MCF 10A (cell line): ENCODE measurements at regions of chr20 and their contacts with region 1.

Region 1: GRCh38 chr20:1776681-1777475 is 118.3 kb upstream of the SIRPA start:
- DNase-seq: peak; percentile 87
- H3K4me3 Mint-ChIP-seq: peak overlapping the region; percentile 84
- H3K27ac Mint-ChIP-seq: peak overlapping the region; percentile 89
- H3K4me1 Mint-ChIP-seq: peaks cover 18% of the 10 kb centered on the region
- H3K27me3 Mint-ChIP-seq: peaks cover 14% of the 10 kb centered on the region
- CTCF ChIP-seq: peak; percentile 75

Region 2: DNA sequence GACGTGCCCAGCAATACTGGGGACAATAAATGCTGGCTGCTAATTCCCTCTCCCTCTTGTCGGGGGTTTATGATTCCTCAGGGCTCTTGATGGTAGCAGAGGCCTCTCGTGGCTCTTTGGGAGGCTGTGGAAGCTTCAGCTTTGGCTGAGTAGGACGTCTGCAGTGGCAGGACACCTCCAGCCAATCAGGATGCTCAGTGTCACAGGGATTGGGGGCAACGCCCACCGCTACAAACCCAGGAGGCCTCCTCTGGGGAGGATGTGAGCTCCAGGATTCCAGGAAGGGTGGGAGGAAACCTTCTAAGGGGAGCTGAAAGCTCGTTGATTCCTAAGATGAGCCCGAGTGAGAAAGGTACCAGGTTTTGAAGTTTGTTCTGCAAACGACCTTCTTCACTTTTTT is 794.1 kb before region 1 on chr20:
- CTCF ChIA-PET with region 1: no interaction called
- POLR2A ChIA-PET with region 1: no interaction called
- intact Hi-C with region 1: no loop called
- DNase-seq: no peak
- H3K4me3 Mint-ChIP-seq: no peak overlapping the region
- H3K27ac Mint-ChIP-seq: no peak overlapping the region
- H3K4me1 Mint-ChIP-seq: peaks cover 7% of the 10 kb centered on the region
- H3K27me3 Mint-ChIP-seq: peaks cover 62% of the 10 kb centered on the region
- CTCF ChIP-seq: no peak

Region 3: DNA sequence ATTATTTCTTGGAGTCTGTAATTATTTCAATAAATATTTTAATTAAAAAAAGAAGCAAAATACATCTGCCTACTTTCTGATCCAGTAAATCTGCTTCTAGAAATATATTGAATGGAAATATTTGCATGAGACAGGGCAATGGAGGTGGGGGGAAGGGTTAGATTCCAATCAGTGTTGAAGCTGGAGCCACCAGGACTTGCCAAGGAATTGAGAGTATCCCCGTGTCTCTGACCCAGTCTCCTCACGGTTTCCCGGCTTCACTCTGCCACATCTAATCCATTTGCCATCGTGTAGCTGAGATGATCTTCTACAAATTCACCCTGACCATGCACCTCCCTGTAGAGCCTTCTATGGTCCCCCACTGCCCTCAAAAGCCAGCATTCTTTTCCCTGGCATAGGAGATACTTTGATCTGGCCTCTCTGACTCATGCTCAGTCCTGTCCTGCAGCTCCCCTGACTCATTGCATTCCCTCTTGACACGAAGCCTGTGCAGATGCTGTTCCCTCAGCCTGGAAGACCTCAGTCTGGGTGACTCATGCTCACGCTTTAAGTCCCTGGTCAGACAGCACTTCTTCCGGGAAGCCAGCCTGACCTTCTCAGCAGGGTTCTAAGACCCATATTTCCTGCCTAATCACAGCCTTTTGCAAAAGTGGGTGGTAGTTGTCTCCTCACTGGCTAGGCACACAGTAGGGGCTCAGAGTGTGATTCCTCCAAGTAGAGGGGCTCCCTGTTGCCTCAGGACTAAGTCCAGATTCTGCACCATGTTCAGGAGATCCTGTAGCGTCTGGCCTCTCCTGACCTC is 361.0 kb before region 1 on chr20:
- CTCF ChIA-PET with region 1: no interaction called
- POLR2A ChIA-PET with region 1: no interaction called
- intact Hi-C with region 1: no loop called
- DNase-seq: peak; percentile 97
- H3K4me3 Mint-ChIP-seq: no peak overlapping the region
- H3K27ac Mint-ChIP-seq: peak overlapping the region; percentile 32
- H3K4me1 Mint-ChIP-seq: peaks cover 17% of the 10 kb centered on the region
- H3K27me3 Mint-ChIP-seq: no peaks in the 10 kb centered on the region
- CTCF ChIP-seq: no peak

Region 4: DNA sequence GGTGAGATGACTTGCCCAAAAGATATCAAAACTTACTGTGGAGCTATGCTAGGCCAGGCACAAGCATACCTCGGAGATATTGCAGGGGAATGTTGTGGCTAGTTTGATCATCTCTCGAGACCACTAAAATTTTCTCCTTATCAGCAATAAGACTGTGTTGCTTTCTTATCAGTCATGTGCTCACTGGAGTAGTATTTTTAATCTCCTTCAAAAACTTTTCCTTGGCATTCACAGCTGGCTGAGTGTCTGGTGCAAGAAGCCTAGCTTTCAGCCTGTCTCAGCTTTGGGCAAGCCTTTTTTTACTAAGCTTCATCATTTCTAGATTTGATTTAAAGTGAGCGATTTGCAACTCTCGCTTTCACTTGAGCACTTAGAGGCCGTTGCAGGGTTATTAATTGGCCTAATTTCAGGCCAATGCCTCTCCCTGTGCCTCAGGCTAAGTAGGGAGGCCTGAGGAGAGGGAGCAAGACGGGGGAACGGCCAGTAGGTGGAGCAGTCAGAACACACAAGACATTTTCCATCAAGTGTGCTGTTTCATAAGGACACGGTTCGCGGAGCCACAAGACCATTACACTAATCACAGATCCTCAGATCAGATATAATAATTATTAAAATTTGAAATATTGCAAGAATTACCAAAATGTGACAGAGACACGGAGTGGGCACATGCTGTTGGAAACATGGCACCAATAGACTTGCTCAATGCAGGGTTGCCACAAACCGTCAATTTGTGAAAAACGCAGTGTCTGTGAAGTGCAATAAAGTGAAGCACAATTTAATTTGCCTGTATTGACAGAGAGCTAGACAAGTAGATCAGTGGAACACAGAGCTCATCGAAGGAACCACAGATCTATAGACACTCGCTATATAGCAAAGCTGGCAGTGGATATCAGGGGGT is 12.5 kb before region 1 on chr20:
- CTCF ChIA-PET with region 1: interaction called, 64 read pairs
- POLR2A ChIA-PET with region 1: interaction called, 29 read pairs
- intact Hi-C with region 1: no loop called
- DNase-seq: peak; percentile 84
- H3K4me3 Mint-ChIP-seq: no peak overlapping the region
- H3K27ac Mint-ChIP-seq: no peak overlapping the region
- H3K4me1 Mint-ChIP-seq: peaks cover 10% of the 10 kb centered on the region
- H3K27me3 Mint-ChIP-seq: no peaks in the 10 kb centered on the region
- CTCF ChIP-seq: peak; percentile 54

Region 5: DNA sequence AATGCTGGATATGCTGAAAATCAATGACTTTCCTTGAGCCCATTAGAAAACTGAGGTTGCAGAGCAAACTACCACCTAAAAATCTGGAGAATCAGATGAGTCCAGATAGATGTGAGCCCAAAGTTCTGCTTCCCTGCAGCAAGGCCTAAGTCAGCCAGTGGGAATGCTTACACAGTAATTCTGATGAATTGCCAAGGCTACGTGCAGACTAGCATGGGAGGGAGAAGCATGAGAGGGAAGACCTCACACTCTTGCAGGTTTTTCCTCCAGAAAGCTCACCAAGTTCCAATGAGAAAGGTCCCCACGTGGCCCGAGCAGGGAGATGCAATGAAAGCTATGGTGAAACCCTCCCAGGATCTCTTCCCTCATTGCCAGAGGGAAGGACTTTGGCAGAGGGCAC is 13.5 kb after region 1 on chr20:
- CTCF ChIA-PET with region 1: interaction called, 37 read pairs
- POLR2A ChIA-PET with region 1: interaction called, 9 read pairs
- intact Hi-C with region 1: no loop called
- DNase-seq: no peak
- H3K4me3 Mint-ChIP-seq: no peak overlapping the region
- H3K27ac Mint-ChIP-seq: no peak overlapping the region
- H3K4me1 Mint-ChIP-seq: peaks cover 6% of the 10 kb centered on the region
- H3K27me3 Mint-ChIP-seq: peaks cover 32% of the 10 kb centered on the region
- CTCF ChIP-seq: no peak

Region 6: GRCh38 chr20:1802385-1803060 is 25.6 kb after region 1 on chr20:
- CTCF ChIA-PET with region 1: interaction called, 15 read pairs
- POLR2A ChIA-PET with region 1: interaction called, 4 read pairs
- intact Hi-C with region 1: no loop called
- DNase-seq: peak; percentile 45
- H3K4me3 Mint-ChIP-seq: no peak overlapping the region
- H3K27ac Mint-ChIP-seq: no peak overlapping the region
- H3K4me1 Mint-ChIP-seq: peaks cover 4% of the 10 kb centered on the region
- H3K27me3 Mint-ChIP-seq: no peaks in the 10 kb centered on the region
- CTCF ChIP-seq: peak; percentile 56

Region 7: DNA sequence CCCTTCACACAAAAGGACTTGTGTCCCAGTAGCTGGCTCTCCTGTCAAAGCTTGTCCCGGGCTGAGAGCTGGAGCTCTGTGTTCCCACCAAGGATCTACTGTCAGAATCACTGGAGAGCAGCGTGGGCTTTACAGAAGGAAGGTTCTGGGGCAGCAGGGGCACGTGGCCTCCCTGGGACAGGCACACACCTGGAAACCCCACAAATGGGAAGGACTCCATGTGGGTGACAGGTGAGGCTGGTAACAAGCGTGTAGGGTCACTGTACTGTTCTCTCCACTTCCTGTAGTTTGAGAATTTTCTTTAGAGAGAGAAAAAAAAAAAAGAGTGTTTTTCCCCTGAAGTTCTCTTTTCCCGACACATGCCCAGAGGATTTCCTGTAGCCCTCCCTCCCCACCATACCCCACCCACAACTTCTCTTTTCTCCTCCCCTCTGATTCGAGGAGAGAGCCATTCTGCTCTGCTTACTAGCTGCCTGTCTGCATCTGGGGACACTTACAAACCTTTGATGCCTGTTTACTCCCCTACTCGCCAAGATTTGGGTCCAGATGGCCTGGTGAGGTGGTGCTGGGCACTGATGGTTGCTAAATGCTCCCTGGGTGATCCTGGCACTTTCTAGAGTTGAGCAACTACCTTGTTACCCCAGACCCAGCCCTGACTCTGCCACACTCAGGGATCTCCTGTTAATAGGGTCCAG is 34.2 kb after region 1 on chr20:
- CTCF ChIA-PET with region 1: interaction called, 7 read pairs
- POLR2A ChIA-PET with region 1: interaction called, 10 read pairs
- intact Hi-C with region 1: no loop called
- DNase-seq: no peak
- H3K4me3 Mint-ChIP-seq: no peak overlapping the region
- H3K27ac Mint-ChIP-seq: no peak overlapping the region
- H3K4me1 Mint-ChIP-seq: peaks cover 37% of the 10 kb centered on the region
- H3K27me3 Mint-ChIP-seq: no peaks in the 10 kb centered on the region
- CTCF ChIP-seq: no peak